ENCODE measurements at regions of chr17 and their contacts with region 1.

Region 1: GRCh38 chr17:3738562-3739295 is 15.0 kb downstream of the HASPIN start:
- DNase-seq: no peak
- ATAC-seq: peak; percentile 44
- H3K4me3 ChIP-seq: peak overlapping the region in 1 of 3 experiments; percentile 55; a peak in 1 of 6 replicates
- H3K27ac ChIP-seq: no peak overlapping the region
- H3K4me1 ChIP-seq: peaks cover 60% of the 10 kb centered on the region
- H3K27me3 ChIP-seq: no peaks in the 10 kb centered on the region
- CTCF ChIP-seq: no peak
- EP300 ChIP-seq: no peak
- POLR2A ChIP-seq: no peak
- RAD21 ChIP-seq: no peak

Region 2: DNA sequence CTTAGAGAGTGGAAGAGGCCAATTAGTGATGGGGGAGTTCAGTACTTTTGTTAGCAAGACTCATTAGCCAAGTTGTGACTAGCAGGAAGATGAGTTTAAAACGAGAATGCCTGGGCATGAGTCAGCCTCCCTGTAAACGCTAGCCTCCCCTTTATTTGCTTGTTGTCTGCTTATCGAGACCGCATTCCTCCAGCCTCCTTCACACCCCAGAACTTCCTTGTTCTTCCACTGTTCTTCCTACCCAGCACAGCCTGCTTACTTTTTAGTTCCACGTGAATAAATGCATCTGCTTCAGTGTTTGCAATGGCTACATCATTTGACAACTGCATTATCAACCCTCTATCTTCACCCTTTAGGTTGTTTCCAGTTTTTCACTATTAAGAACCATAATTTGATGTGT is 420.4 kb before region 1 on chr17:
- CTCF ChIA-PET with region 1: no interaction called
- POLR2A ChIA-PET with region 1: no interaction called
- in situ Hi-C with region 1: no loop called
- intact Hi-C with region 1: no loop called
- DNase-seq: no peak
- ATAC-seq: no peak
- H3K4me3 ChIP-seq: no peak overlapping the region
- H3K27ac ChIP-seq: no peak overlapping the region
- H3K4me1 ChIP-seq: no peaks in the 10 kb centered on the region
- H3K27me3 ChIP-seq: peaks cover 0 to 2% of the 10 kb centered on the region in 2 experiments; a peak in 2 of 5 replicates
- CTCF ChIP-seq: no peak
- EP300 ChIP-seq: no peak
- POLR2A ChIP-seq: no peak
- RAD21 ChIP-seq: no peak

Region 3: DNA sequence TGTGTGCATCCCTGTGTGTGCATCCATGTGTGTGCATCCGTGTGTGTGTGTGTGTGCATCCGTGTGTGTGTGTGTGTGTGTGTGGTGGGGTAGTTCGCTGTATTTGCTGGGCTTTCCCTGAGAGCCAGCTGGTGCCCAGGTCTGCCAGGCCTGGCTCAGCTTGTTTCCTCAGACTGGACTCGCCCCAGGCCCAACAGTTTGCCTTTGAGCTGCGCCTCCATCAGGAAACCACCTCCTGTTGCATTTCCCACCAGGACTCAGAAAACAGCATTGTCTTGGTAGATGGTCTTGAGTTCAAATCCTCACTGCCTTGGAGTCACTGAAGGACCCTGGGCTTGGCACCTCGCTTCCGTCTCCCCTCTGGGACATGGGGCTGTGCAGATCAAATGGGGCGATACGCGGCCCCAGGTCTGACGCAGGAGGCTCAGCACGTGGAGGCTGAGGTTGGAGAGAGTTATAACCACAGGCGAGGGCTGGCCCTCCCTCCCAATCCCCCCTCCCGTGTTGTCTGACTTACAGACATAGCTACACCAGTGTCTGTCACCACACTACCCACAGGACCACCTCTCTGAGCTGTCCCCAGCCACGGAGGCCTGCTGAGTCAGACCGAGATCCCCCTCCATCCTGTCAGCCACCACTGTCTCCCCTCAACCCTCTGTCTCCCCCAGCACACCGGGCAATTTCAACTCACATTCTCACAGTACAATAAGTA is 57.5 kb after region 1 on chr17:
- CTCF ChIA-PET with region 1: no interaction called
- POLR2A ChIA-PET with region 1: interaction called, 19 read pairs
- in situ Hi-C with region 1: no loop called
- intact Hi-C with region 1: no loop called
- DNase-seq: no peak
- ATAC-seq: no peak
- H3K4me3 ChIP-seq: no peak overlapping the region
- H3K27ac ChIP-seq: peak overlapping the region; percentile 92
- H3K4me1 ChIP-seq: peaks cover 71% of the 10 kb centered on the region
- H3K27me3 ChIP-seq: no peaks in the 10 kb centered on the region
- CTCF ChIP-seq: no peak
- EP300 ChIP-seq: no peak
- POLR2A ChIP-seq: no peak
- RAD21 ChIP-seq: no peak

Region 4: DNA sequence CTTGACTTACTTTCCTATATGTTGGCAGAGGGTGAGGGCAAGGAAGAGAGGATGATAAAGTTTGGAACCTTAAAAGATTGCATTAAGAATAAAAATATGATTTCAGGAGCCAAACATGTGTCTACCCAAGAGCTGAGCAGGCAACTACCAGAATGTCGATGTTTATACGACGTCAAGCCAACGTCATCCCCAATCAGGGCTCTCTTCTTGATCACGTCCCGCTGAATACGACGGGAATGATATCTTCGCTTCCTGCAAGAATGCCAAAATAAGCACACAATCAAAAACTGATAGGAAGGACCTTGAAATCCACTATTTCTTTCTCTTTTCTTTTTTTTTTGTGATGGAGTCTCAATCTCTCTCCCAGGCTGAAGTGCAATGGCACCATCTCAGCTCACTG is 82.4 kb after region 1 on chr17:
- CTCF ChIA-PET with region 1: interaction called, 46 read pairs
- POLR2A ChIA-PET with region 1: interaction called, 3 read pairs
- in situ Hi-C with region 1: loop called (anchors 5 kb)
- intact Hi-C with region 1: no loop called
- DNase-seq: no peak
- ATAC-seq: no peak
- H3K4me3 ChIP-seq: no peak overlapping the region
- H3K27ac ChIP-seq: no peak overlapping the region
- H3K4me1 ChIP-seq: peaks cover 10% of the 10 kb centered on the region; the same call in 1 of the 2 replicates
- H3K27me3 ChIP-seq: no peaks in the 10 kb centered on the region
- CTCF ChIP-seq: no peak
- EP300 ChIP-seq: no peak
- POLR2A ChIP-seq: no peak
- RAD21 ChIP-seq: no peak

Region 5: DNA sequence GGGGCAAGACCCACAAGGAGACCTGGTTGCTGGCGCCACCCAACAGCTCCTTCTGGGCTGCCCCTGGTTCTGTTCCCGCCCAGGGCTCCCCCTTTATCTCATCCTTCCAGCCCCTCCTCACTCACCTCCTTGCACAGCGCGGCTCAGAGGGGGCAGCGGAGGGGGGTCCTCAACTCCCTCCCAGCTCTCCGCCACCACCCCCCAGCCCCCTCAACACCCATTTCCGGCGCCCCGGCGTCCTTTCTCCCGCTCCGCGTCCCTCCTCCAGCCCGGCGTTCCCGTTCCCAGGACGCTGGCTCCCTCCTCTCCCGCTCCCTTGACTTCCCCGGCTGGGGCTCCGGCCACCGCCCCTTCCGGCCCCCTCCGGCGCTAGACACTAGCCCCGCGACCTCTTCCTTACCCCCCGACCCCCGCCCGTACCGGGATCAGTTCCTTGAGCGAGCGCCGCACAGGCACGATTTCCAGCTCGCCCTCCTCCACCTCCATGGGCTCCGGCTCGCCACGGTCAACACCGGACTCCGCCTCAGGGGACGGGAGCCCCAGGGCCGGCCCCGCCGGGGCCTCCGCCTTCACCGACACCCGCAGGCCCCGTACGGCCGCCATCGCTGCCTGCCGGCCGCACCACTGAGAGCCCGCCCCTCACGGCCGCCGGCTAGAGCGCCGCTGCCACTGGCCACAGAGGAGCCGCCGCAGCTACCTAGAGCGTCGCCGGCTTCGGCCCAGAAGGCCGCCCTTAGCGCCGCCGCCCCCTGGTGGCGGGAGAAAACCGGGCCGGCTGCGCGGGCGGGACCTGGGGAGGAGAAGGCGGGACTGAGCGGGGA is 107.1 kb after region 1 on chr17 and contains the start of gene NCBP3:
- CTCF ChIA-PET with region 1: interaction called, 3 read pairs
- POLR2A ChIA-PET with region 1: interaction called, 9 read pairs
- in situ Hi-C with region 1: no loop called
- intact Hi-C with region 1: loop called (anchors 5 kb)
- DNase-seq: peak; percentile 81
- ATAC-seq: peak; percentile 98
- H3K4me3 ChIP-seq: peak within 1 kb of the TSS; percentile 97 to 98 (median 98)
- H3K27ac ChIP-seq: peak within 1 kb of the TSS; percentile 80
- H3K4me1 ChIP-seq: peaks cover 49% of the 10 kb centered on the region
- H3K27me3 ChIP-seq: no peaks in the 10 kb centered on the region; a peak in 1 of 5 replicates
- CTCF ChIP-seq: peak; percentile 96
- EP300 ChIP-seq: peak in 1 of 2 experiments; percentile 26; a peak in 2 of 4 replicates
- POLR2A ChIP-seq: peak; percentile 85 to 86
- RAD21 ChIP-seq: peak; percentile 73
- total RNA-seq, gene NCBP3: 20.6 and 24.8 TPM in 2 replicates

Measured in HepG2 (cell line).